Brain microvascular endothelial cell (primary cell): ENCODE measurements at regions of chr17 and their contacts with region 1.

Region 1: GRCh38 chr17:81101614-81102306 is 63.5 kb upstream of the PVALEF start:
- DNase-seq: peak; percentile 64
- H3K4me3 ChIP-seq: no peak overlapping the region
- H3K27ac ChIP-seq: no peak overlapping the region
- H3K27me3 ChIP-seq: no peaks in the 10 kb centered on the region
- CTCF ChIP-seq: peak; percentile 100

Region 2: DNA sequence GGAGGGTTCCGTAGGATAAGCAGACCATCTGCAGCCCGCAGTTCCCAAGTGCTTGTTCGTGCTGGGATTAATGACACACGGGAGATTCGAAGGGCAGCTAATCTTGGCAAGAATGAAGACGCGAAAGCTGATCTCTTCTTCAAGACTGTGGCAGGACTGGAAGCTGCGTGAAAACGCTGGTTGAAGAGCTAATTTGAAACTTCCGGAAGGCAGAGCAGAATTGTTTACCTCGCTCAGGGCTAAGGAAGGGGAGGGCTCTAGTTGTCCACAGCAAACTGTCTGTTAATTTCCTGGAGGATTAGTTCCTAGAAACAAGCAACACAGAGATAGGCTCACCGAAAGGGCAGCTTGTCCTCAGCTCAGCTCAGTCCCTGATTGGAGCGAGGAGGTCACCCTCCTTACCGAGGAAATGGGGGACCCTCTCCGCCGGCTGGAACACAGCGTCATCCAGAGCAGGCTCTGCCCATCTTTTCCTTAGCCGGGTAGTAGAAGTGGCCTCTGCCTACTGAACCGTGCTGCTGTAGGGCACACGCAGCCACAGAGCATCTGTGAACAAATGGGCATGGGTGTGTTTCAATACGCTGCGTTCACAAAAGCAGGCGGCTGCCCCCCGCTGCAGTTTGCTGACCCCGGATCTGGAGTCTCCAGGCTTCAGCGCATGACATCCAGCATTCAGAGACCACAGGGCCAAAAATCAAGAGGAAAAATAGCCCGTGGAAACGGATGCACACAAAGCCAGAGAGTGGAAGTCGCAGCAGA is 83.5 kb before region 1 on chr17:
- in situ Hi-C with region 1: loop called (anchors 25 kb)
- DNase-seq: no peak
- H3K4me3 ChIP-seq: peak overlapping the region; percentile 45
- H3K27ac ChIP-seq: peak overlapping the region; percentile 10
- H3K27me3 ChIP-seq: no peaks in the 10 kb centered on the region
- CTCF ChIP-seq: no peak